ENCODE measurements at regions of chr10 and their contacts with region 1.

Region 1: DNA sequence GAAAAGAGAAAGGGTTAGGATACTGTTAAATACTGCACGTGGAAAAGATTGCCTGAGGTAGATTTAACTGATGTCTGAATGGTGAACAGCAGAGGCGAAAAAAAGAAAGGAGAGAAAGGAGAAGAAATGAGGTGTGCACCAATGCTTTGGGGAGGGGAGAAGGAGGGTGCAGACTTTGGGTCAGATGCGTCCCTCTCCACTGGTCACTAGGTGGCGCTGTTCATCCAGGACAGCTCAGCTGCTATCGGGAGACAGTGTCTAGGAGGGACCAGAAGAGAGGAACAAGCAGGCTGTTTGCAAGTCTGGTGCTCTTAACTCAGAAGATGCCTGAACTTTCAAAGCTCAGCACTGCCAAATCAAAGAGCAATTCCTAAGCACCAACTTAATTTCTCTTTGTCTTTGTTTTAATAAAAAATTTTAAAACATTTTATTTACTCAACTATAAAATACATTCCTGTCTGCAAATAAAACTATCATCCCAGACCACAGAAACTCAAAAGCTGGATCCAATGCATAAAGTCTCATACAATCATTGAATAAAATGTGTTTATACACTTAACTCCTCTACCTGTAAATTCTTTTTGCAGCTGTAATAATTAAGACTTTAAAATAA is 83.9 kb upstream of the PDLIM1 start:
- DNase-seq: peak; percentile 81 to 90 (median 89)
- H3K4me3 ChIP-seq: no peak overlapping the region
- H3K27ac ChIP-seq: no peak overlapping the region
- H3K4me1 ChIP-seq: no peaks in the 10 kb centered on the region
- H3K27me3 ChIP-seq: peaks cover 0 to 4% (median 0%) of the 10 kb centered on the region in 5 experiments

Region 2: GRCh38 chr10:95183271-95184230 is 191.2 kb before region 1 on chr10:
- CTCF ChIA-PET with region 1: no interaction called
- POLR2A ChIA-PET with region 1: no interaction called
- DNase-seq: peak; percentile 85 to 88 (median 88)
- H3K4me3 ChIP-seq: peak overlapping the region; percentile 55 to 97 (median 76)
- H3K27ac ChIP-seq: peak overlapping the region; percentile 54 to 83
- H3K4me1 ChIP-seq: peaks cover 0 to 12% (median 4%) of the 10 kb centered on the region in 4 experiments
- H3K27me3 ChIP-seq: no peaks in the 10 kb centered on the region

Region 3: DNA sequence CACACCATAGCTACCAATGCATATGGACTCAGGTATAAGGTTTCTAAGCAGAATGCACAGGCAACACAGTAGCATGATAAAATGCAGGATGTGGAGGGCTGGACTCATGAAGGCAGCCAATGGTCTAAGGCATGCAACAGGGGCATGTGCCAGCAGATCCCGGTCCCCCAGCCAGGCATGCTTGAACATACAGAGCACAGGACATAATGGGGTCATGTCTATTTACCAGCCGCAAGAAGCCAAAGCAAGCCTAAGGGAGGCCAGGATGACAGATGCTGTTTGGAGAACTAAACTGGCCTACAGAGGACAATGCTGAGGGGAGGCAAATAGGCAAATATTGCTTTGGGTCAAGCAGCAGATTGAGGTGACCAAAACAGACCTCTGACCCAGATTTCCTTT is 23.9 kb before region 1 on chr10:
- CTCF ChIA-PET with region 1: no interaction called
- POLR2A ChIA-PET with region 1: no interaction called
- DNase-seq: no peak
- H3K4me3 ChIP-seq: no peak overlapping the region
- H3K27ac ChIP-seq: no peak overlapping the region
- H3K4me1 ChIP-seq: no peaks in the 10 kb centered on the region
- H3K27me3 ChIP-seq: no peaks in the 10 kb centered on the region

Region 4: DNA sequence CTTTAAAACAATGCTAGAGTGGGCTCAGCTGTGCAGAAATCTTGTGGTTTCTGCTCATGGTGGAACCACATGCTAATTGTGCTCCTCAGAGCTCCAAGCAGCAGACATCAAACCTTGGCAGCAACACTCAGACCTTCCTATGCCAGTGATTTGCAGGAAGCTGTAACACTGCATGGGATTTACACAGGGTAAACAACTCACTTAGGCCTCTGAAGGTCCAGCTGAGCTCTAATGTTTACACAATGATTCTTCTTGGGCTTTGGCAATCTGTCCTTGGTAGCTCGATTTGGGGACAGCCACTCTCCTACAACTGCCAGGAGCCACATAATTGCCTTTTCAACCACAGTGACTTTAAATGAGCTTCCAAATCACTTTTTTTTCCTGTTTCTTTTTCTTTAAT is 13.8 kb after region 1 on chr10:
- CTCF ChIA-PET with region 1: interaction called, 26 read pairs
- POLR2A ChIA-PET with region 1: no interaction called
- DNase-seq: no peak
- H3K4me3 ChIP-seq: no peak overlapping the region
- H3K27ac ChIP-seq: no peak overlapping the region
- H3K4me1 ChIP-seq: peaks cover 0 to 5% (median 2%) of the 10 kb centered on the region in 4 experiments
- H3K27me3 ChIP-seq: no peaks in the 10 kb centered on the region

Region 5: DNA sequence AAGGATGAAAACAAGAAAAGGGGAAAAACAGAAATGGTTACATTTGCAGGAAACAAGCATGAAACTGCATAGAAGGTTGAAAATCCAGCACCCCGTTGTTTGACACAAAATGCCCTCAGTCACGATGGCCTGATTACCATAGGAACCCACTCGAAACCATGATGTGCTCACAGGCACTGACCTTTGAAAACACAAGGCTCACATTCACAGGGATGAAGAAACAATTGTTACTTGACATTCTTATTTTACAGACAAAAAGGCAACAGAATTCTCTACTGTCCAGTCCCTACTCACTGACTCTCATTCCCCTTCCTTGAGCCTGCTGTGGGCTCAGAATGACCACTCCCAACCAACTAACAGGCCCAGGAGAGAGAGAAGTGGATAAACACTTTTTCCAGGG is 47.5 kb after region 1 on chr10:
- CTCF ChIA-PET with region 1: interaction called, 18 read pairs
- POLR2A ChIA-PET with region 1: no interaction called
- DNase-seq: no peak
- H3K4me3 ChIP-seq: no peak overlapping the region
- H3K27ac ChIP-seq: no peak overlapping the region
- H3K4me1 ChIP-seq: peaks cover 0 to 8% (median 1%) of the 10 kb centered on the region in 4 experiments
- H3K27me3 ChIP-seq: peaks cover 0 to 3% (median 0%) of the 10 kb centered on the region in 5 experiments

Region 6: DNA sequence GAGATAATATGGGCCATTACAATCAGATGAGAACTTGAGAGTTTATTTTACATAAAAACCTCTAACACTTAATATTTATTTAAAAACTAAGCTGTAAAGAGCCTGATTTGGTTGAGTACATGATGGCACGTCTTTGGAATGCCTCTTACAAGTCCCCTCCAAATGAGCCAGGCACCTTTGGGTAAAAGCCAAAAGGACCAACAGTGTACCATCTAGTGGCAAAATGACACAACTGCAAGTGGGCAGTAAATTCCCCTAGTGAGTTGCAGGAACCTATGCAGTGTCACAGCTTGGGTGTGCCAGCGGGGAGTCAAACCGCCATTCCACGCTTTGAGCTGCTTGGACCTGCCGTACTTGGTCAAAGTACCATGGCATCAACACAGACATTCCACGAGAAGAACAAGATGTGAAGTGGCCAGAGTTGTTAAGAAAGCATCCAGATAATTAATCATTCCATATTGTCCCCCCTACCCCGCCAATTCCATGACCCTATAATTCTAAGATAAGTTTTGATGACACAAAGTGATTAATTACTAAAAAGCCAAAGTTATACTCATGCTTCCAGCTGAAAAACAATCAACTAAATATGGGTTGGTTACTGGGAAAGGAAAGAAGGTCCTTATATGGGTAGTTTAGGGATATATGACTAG is 71.3 kb after region 1 on chr10:
- CTCF ChIA-PET with region 1: interaction called, 12 read pairs
- POLR2A ChIA-PET with region 1: no interaction called
- DNase-seq: peak; percentile 75 to 86 (median 83)
- H3K4me3 ChIP-seq: no peak overlapping the region
- H3K27ac ChIP-seq: no peak overlapping the region
- H3K4me1 ChIP-seq: peaks cover 0 to 9% (median 2%) of the 10 kb centered on the region in 4 experiments
- H3K27me3 ChIP-seq: no peaks in the 10 kb centered on the region

Region 7: GRCh38 chr10:95485445-95485844 is 110.7 kb after region 1 on chr10:
- CTCF ChIA-PET with region 1: no interaction called
- POLR2A ChIA-PET with region 1: no interaction called
- DNase-seq: no peak
- H3K4me3 ChIP-seq: no peak overlapping the region
- H3K27ac ChIP-seq: no peak overlapping the region
- H3K4me1 ChIP-seq: peaks cover 0 to under 1% (median 0%) of the 10 kb centered on the region in 4 experiments
- H3K27me3 ChIP-seq: no peaks in the 10 kb centered on the region

Region 8: DNA sequence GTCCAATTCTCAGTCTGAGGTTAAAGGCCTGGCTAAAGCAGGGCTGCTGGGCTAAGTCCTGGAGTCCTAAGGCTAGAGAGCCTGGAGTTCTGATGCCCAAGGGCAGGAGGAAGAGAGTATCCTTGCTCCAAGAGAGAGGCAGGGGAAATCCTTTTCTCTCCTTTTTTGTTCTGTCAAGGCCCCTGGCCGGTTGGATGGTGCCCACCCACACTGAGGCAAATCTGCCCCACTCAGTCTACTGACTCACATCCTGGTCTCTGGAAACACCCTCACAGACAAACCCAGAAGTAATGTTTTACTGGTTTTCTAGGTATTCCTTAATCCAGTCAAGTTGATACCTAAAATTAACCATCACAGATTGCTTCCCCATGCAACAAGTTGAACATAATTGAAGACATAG is 778.4 kb after region 1 on chr10:
- CTCF ChIA-PET with region 1: no interaction called
- POLR2A ChIA-PET with region 1: no interaction called
- DNase-seq: no peak
- H3K4me3 ChIP-seq: no peak overlapping the region
- H3K27ac ChIP-seq: no peak overlapping the region
- H3K4me1 ChIP-seq: no peaks in the 10 kb centered on the region
- H3K27me3 ChIP-seq: no peaks in the 10 kb centered on the region

Measured in common myeloid progenitor, CD34-positive (primary cell).